ENCODE measurements at regions of chr14 and their contacts with region 1.

Region 1: GRCh38 chr14:20327005-20327869 is 5.8 kb downstream of the CCNB1IP1 start:
- DNase-seq: no peak
- H3K4me3 Mint-ChIP-seq: no peak overlapping the region
- H3K27ac Mint-ChIP-seq: peak overlapping the region; percentile 64
- H3K4me1 Mint-ChIP-seq: peaks cover 50% of the 10 kb centered on the region
- H3K27me3 Mint-ChIP-seq: no peaks in the 10 kb centered on the region

Region 2: DNA sequence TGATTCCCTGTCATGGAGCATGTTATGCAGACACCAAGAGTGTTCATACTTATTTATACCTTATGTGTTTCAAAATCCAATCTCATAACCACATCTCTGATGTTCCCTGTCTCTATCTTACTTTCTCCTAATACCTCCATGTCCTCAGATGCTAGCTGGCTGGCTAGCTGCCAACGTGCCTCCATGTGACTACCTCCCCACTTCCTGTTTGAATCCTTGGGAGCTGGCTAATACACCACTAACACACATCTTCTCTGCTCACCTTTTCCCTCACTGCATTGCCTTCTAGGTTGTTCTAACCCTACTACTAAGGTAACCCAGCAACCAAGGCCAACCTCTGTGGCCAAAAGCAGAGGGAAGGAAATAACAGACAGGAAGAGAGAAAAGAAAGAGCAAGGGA is 48.8 kb before region 1 on chr14:
- CTCF ChIA-PET with region 1: no interaction called
- POLR2A ChIA-PET with region 1: no interaction called
- DNase-seq: no peak
- H3K4me3 Mint-ChIP-seq: no peak overlapping the region
- H3K27ac Mint-ChIP-seq: no peak overlapping the region
- H3K4me1 Mint-ChIP-seq: peaks cover 18% of the 10 kb centered on the region
- H3K27me3 Mint-ChIP-seq: no peaks in the 10 kb centered on the region

Region 3: GRCh38 chr14:20305265-20306078 is 21.8 kb before region 1 on chr14 and contains the start of gene TTC5:
- CTCF ChIA-PET with region 1: interaction called, 15 read pairs
- POLR2A ChIA-PET with region 1: no interaction called
- DNase-seq: peak; percentile 91
- H3K4me3 Mint-ChIP-seq: peak within 1 kb of the TSS; percentile 83
- H3K27ac Mint-ChIP-seq: peak within 1 kb of the TSS; percentile 67
- H3K4me1 Mint-ChIP-seq: peaks cover 32% of the 10 kb centered on the region
- H3K27me3 Mint-ChIP-seq: no peaks in the 10 kb centered on the region
- total RNA-seq, gene TTC5: 20.5 to 21.2 TPM

Region 4: DNA sequence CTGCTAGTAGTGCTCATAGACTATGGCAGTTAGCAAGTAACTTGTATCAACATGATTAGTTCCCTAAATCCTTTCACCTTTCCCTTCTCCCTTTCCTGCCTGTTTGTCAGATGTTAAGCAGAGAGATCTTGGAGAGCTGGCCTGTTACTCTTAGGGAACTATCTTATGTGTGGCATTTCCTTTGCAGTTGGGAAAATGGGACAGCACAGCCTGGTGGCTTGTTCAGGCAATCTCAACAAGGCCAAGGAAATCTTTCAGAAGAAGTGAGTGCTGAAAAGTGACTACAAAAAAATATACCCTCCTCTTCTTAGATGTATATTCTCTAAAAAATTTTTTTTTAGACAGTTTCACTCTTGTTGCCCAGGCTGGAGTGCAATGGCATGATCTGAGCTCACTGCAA is 23.6 kb after region 1 on chr14:
- CTCF ChIA-PET with region 1: interaction called, 21 read pairs
- POLR2A ChIA-PET with region 1: no interaction called
- DNase-seq: no peak
- H3K4me3 Mint-ChIP-seq: no peak overlapping the region
- H3K27ac Mint-ChIP-seq: no peak overlapping the region
- H3K4me1 Mint-ChIP-seq: peaks cover 4% of the 10 kb centered on the region
- H3K27me3 Mint-ChIP-seq: no peaks in the 10 kb centered on the region

Region 5: DNA sequence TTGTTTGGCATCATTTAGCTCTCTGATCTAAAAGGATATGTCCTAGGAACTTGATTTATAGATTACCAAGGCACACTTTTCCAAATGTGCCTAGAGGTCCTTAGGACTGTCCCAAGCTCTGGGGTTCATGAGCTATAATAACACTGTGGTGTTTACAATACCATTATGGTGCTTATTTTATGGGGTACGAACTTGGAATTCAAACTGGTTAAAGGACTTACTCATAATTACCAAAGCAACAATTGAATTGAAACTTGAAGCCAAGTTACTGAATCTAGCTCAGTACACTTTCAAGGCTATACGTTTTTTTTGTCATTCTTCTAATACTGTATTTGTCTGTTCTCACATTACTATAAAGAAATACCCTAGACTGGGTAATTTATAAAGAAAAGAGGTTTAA is 95.6 kb after region 1 on chr14:
- CTCF ChIA-PET with region 1: no interaction called
- POLR2A ChIA-PET with region 1: no interaction called
- DNase-seq: no peak
- H3K4me3 Mint-ChIP-seq: no peak overlapping the region
- H3K27ac Mint-ChIP-seq: no peak overlapping the region
- H3K4me1 Mint-ChIP-seq: peaks cover 9% of the 10 kb centered on the region
- H3K27me3 Mint-ChIP-seq: peaks cover 3% of the 10 kb centered on the region

Measured in activated CD4-positive, alpha-beta memory T cell treated with anti-CD3 and anti-CD28 coated beads, Interleukin-2, amount 10 ng/mL, durations not matched to agents 7 days and 5 days (primary cell).